ENCODE measurements at regions of chr2 and their contacts with region 1.

Region 1: DNA sequence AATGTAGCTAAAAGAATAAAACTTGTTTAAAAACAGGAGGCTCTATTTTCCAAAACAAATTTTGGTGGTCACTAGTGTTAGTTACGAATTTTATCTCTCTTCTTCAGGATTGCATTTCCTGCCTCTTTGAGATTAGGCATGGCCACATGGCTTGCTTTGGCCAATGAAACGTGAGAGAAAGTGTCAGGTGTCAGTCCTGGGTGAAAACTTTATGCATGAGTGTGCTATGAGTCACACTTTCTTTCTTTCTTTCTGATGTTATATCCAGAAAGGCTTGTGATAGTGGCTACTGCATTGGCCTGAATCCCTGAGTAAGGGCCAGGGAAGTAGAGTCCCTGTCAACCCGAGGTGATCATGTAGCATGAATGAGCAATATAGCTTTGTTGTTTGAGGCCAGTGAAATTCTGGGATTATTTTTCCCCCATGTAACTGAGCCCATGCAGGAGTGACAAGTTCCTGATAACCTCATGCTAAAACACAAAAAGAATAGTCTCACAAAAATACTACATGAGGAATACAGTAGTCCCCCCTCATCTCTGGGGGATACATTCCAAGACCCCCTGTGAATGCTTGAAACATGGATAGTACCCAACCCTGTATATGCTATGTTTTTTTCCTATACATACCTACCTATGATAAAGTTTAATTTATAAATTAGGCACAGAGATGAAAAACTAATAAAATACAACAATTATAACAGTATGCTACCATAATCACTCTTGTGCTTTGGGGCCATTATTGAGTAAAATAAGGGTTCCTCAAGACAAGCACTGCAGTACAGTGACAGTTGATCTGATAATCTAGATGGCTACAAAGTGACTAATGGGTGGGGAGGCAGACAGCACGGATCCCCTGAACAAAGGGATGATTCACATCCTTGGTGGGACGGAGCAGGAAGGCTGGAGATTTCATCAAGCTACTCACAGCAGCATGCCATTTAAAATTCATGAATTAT is 109.5 kb downstream of the CDC42EP3 start:
- DNase-seq: no peak
- ATAC-seq: peak; percentile 86
- H3K4me3 ChIP-seq: no peak overlapping the region
- H3K27ac ChIP-seq: peak overlapping the region; percentile 42; the same call in 1 of the 2 replicates
- H3K4me1 ChIP-seq: peaks cover 46% of the 10 kb centered on the region
- H3K27me3 ChIP-seq: no peaks in the 10 kb centered on the region
- CTCF ChIP-seq: no peak
- EP300 ChIP-seq: no peak
- POLR2A ChIP-seq: no peak
- RAD21 ChIP-seq: no peak

Region 2: GRCh38 chr2:37059841-37060240 is 502.1 kb before region 1 on chr2:
- CTCF ChIA-PET with region 1: no interaction called
- POLR2A ChIA-PET with region 1: no interaction called
- RAD21 ChIA-PET with region 1: no interaction called
- SMC1A ChIA-PET with region 1: no interaction called
- in situ Hi-C with region 1: no loop called
- intact Hi-C with region 1: no loop called
- DNase-seq: no peak
- ATAC-seq: no peak
- H3K4me3 ChIP-seq: no peak overlapping the region
- H3K27ac ChIP-seq: no peak overlapping the region
- H3K4me1 ChIP-seq: no peaks in the 10 kb centered on the region
- H3K27me3 ChIP-seq: no peaks in the 10 kb centered on the region
- CTCF ChIP-seq: no peak
- EP300 ChIP-seq: no peak
- POLR2A ChIP-seq: no peak
- RAD21 ChIP-seq: no peak

Region 3: DNA sequence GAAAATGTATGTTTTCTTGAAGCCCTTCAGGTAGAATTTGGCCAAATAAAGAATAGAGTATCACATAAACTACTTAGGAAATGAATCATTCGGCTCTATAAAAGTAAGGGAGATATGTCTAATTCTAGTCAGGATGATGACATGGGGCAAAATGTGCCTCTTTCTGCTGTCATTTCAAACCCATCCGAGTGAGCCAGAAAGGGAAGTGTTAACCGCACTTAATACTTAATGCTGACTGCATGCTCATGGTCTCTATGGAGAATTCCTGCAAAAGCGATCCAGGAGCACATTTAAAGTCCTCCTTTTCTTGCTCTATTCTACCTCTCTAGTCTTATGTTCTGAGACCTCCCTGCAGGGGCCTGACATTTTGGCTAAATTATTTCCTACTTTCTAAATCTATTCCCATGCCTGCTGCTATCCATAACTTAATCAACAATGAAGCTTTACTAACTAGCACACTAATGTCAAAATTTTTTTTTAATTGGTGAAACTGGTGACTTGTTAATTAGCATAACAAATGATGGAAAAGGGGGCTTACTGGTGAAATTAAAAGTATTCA is 17.8 kb before region 1 on chr2:
- CTCF ChIA-PET with region 1: interaction called, 11 read pairs
- POLR2A ChIA-PET with region 1: interaction called, 39 read pairs
- RAD21 ChIA-PET with region 1: interaction called, 44 read pairs
- SMC1A ChIA-PET with region 1: interaction called, 246 read pairs
- in situ Hi-C with region 1: no loop called
- intact Hi-C with region 1: no loop called
- DNase-seq: no peak
- ATAC-seq: no peak
- H3K4me3 ChIP-seq: no peak overlapping the region
- H3K27ac ChIP-seq: no peak overlapping the region
- H3K4me1 ChIP-seq: peaks cover 8% of the 10 kb centered on the region; the same call in 1 of the 2 replicates
- H3K27me3 ChIP-seq: no peaks in the 10 kb centered on the region
- CTCF ChIP-seq: no peak
- EP300 ChIP-seq: no peak
- POLR2A ChIP-seq: no peak
- RAD21 ChIP-seq: no peak

Region 4: DNA sequence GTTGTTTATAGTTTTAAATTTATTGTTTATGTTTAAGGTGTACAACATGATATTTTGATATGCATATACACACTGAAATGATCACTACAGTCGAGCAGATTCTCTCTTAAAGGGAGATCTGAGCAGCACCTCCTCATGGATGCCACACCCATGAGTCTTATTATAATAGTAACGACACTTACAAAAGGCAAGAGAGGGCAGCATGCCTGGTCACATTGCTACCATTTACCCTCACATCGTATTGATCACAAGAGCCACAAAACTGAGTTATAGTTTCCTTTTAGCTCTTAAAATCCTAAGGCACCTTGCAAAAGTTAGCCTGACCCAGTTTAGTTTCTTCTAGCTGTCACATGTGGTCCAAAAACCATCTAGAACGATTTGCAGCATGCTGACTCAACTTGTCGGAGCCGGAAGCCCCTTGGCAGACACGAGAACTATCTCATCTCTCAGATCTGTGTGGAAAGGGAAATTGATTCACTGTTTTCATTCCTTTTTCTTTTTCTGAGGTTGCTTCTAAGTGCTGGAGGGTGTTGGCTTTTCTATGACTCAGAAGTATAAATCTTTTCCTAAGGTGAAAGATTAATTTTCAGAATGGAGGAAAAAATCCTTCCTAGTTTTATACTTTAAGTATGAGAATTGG is 24.2 kb after region 1 on chr2:
- CTCF ChIA-PET with region 1: interaction called, 4 read pairs
- POLR2A ChIA-PET with region 1: interaction called, 13 read pairs
- RAD21 ChIA-PET with region 1: interaction called, 3 read pairs
- SMC1A ChIA-PET with region 1: interaction called, 67 read pairs
- in situ Hi-C with region 1: no loop called
- intact Hi-C with region 1: no loop called
- DNase-seq: peak; percentile 68
- ATAC-seq: peak; percentile 58
- H3K4me3 ChIP-seq: no peak overlapping the region
- H3K27ac ChIP-seq: peak overlapping the region; percentile 61
- H3K4me1 ChIP-seq: peaks cover 42% of the 10 kb centered on the region
- H3K27me3 ChIP-seq: no peaks in the 10 kb centered on the region
- CTCF ChIP-seq: no peak
- EP300 ChIP-seq: no peak
- POLR2A ChIP-seq: no peak
- RAD21 ChIP-seq: no peak

Region 5: GRCh38 chr2:37615804-37616676 is 54.1 kb after region 1 on chr2:
- CTCF ChIA-PET with region 1: interaction called, 24 read pairs
- POLR2A ChIA-PET with region 1: interaction called, 5 read pairs
- RAD21 ChIA-PET with region 1: interaction called, 123 read pairs
- SMC1A ChIA-PET with region 1: interaction called, 58 read pairs
- in situ Hi-C with region 1: no loop called
- intact Hi-C with region 1: no loop called
- DNase-seq: no peak
- ATAC-seq: peak; percentile 58
- H3K4me3 ChIP-seq: no peak overlapping the region
- H3K27ac ChIP-seq: peak overlapping the region; percentile 72
- H3K4me1 ChIP-seq: peaks cover 17% of the 10 kb centered on the region
- H3K27me3 ChIP-seq: no peaks in the 10 kb centered on the region
- CTCF ChIP-seq: no peak
- EP300 ChIP-seq: no peak
- POLR2A ChIP-seq: no peak
- RAD21 ChIP-seq: no peak

Region 6: GRCh38 chr2:37653805-37654378 is 92.0 kb after region 1 on chr2:
- CTCF ChIA-PET with region 1: no interaction called
- POLR2A ChIA-PET with region 1: interaction called, 7 read pairs
- RAD21 ChIA-PET with region 1: interaction called, 9 read pairs
- SMC1A ChIA-PET with region 1: interaction called, 46 read pairs
- in situ Hi-C with region 1: no loop called
- intact Hi-C with region 1: no loop called
- DNase-seq: peak; percentile 84
- ATAC-seq: peak; percentile 78
- H3K4me3 ChIP-seq: peak overlapping the region; percentile 75
- H3K27ac ChIP-seq: peak overlapping the region; percentile 99
- H3K4me1 ChIP-seq: peaks cover 69% of the 10 kb centered on the region
- H3K27me3 ChIP-seq: no peaks in the 10 kb centered on the region
- CTCF ChIP-seq: no peak
- EP300 ChIP-seq: peak; percentile 91 to 94
- POLR2A ChIP-seq: peak; percentile 93
- RAD21 ChIP-seq: peak; percentile 4; the same call in 1 of the 2 replicates

Region 7: DNA sequence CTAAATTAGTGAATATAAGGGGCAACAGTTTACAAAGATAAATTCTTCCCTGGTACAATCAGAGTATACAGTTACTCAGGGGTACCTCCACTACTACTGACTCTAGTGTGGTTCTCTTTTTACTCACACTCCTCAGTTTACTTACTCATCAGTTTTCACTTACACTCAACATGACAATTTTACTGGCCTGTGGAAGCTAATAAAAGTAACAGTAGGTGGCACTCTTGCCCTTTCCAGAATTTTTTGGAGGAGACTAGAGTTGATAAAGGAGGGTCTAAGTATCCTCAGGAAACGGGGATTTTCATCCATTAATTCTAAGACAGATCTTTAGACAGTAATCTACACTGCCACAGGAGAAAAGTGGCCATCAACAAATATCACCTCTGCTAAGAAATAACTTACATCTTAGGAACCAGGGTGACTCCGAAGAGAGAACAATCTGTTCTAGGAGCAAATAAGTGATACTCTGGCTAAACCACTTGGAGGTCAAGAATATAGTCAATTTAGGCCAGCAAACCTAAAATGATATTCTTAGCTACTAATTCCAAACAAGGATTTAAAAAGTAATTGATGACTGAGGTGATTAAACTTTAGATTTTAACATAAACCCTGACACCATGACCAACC is 753.9 kb after region 1 on chr2:
- CTCF ChIA-PET with region 1: no interaction called
- POLR2A ChIA-PET with region 1: no interaction called
- RAD21 ChIA-PET with region 1: no interaction called
- SMC1A ChIA-PET with region 1: no interaction called
- in situ Hi-C with region 1: no loop called
- intact Hi-C with region 1: no loop called
- DNase-seq: peak; percentile 11
- ATAC-seq: peak; percentile 76
- H3K4me3 ChIP-seq: no peak overlapping the region
- H3K27ac ChIP-seq: no peak overlapping the region
- H3K4me1 ChIP-seq: no peaks in the 10 kb centered on the region
- H3K27me3 ChIP-seq: no peaks in the 10 kb centered on the region
- CTCF ChIP-seq: peak; percentile 57 to 66 (median 66)
- EP300 ChIP-seq: no peak
- POLR2A ChIP-seq: no peak
- RAD21 ChIP-seq: peak; percentile 90